GM13977 (cell line): ENCODE measurements at regions of chrX and their contacts with region 1.

Region 1: GRCh38 chrX:153947009-153947769 is 2.7 kb upstream of the RENBP start:
- DNase-seq: peak; percentile 87
- CTCF ChIP-seq: peak; percentile 88

Region 2: DNA sequence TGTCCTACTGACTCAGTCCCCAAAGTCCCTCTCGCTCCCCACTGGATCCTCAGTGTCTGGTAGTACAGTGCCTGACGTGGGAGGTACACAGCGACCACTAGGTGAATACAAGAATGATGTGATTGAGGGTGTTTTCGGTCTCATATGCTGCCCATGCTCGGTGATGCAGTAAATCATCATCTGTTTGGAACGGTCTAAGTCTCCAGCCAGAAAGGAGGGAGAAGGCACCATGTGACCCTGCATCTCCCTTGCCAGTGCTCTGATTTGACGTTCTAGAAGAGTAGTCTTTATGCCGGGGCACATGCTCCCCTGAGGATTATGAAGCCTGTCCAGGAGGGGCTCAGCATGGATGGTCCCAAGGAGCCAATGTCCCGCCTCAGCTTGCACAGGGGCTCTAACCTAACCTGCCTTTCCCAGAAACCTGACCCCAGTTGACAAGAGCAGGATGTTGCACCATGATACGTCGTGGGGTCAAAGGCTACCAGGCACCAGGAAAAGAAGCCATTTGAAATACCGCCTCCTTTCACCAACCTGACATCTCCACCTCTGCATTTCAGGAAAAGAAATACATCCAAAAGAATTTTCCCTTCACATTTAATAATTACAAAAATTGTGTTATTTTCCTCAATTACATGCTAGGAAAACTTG is 196.9 kb before region 1 on chrX:
- in situ Hi-C with region 1: loop called (anchors 10 kb)
- DNase-seq: no peak
- CTCF ChIP-seq: no peak